WTC11 (cell line): ENCODE measurements at regions of chr4 and their contacts with region 1.

Region 1: DNA sequence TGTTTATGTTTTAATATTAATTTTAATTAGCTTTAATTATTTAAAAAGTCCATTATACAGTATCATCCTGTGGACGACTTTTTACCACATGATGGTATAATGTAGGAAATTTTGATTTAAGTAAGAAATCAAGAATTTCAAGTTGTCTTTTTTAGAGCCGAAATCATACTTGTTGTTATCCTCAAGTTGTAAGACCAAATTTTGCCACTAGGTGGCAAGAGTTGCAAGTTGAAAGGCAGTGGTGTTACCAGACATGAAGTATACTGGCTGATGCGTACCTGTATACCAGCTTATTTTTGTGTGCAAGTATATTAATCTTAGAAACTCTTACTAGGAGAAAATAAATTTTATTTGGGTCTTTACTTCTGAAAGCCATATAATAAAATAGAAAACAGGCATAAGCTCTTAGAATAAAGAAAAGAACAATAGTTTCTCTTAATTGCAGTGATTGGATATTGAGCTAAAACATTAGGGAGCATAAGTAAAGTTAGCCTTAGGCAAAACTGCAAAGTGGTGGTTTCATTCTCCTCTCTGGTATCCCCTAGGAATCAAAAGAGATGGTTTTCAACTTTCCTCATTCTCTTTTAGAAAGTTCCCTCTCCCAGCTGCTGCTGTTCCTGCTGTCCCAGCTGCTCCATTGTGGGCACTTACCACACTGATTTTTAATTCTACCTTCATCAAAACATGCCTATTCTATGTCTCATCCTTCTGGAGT is 118.0 kb upstream of the WDFY3 start:
- DNase-seq: no peak
- ATAC-seq: peak; percentile 70
- H3K4me3 Mint-ChIP-seq: no peak overlapping the region
- H3K27ac Mint-ChIP-seq: no peak overlapping the region
- H3K4me1 Mint-ChIP-seq: peaks cover 5% of the 10 kb centered on the region; the same call in 1 of the 2 replicates
- H3K27me3 Mint-ChIP-seq: no peaks in the 10 kb centered on the region
- CTCF ChIP-seq: peak; percentile 47

Region 2: DNA sequence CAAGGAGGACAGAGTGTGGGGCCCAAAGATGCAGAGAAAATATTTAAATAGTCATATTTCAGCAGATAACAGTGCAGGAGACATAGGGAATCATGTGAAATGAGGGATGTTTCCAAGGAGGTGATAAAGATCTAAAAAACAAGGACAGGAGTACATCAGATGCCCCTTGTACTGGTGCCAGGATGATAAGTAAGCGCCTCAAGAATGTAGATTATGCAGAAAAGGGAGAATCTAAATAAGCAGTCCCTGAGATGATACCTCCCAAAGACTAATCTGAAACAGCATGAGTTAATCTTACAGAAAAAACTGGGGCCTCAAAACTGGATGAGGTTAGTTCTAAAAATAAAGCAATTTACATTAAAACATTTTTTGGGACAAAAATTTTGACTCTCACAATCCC is 18.1 kb after region 1 on chr4:
- CTCF ChIA-PET with region 1: interaction called, 12 read pairs
- POLR2A ChIA-PET with region 1: no interaction called
- DNase-seq: no peak
- ATAC-seq: no peak
- H3K4me3 Mint-ChIP-seq: no peak overlapping the region
- H3K27ac Mint-ChIP-seq: no peak overlapping the region
- H3K4me1 Mint-ChIP-seq: no peaks in the 10 kb centered on the region
- H3K27me3 Mint-ChIP-seq: no peaks in the 10 kb centered on the region; the same call in 1 of the 2 replicates
- CTCF ChIP-seq: no peak

Region 3: DNA sequence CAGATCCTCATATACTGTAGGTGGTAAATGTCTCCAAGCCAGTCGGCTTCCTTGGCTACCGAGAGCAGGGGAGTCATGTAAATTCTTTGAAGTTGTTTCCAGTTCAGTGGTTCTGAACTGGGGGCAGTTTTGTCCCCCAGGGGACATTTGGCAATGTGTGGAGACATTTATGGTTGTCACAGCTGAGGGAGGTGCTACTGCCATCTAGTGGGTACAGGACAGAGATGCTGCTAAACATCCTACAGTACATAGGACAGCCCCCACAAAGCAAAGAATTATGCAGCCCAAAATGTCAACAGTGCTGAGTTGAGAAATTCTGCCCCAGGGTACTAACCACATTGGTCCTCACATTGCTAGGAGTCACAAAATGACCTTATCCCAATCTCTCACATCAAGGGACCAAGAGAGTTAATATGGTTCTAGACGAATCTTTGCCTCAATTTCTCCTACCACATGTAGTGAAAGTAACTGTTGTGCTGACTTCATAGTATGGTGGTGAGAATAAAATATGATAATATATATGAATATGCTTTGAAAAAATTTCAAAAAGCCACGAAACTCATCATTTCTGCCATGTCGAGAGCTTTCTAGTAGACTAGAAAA is 286.0 kb after region 1 on chr4:
- CTCF ChIA-PET with region 1: interaction called, 12 read pairs
- POLR2A ChIA-PET with region 1: no interaction called
- DNase-seq: peak; percentile 52
- ATAC-seq: peak; percentile 88
- H3K4me3 Mint-ChIP-seq: no peak overlapping the region
- H3K27ac Mint-ChIP-seq: no peak overlapping the region
- H3K4me1 Mint-ChIP-seq: peaks cover 31% of the 10 kb centered on the region
- H3K27me3 Mint-ChIP-seq: no peaks in the 10 kb centered on the region; the same call in 1 of the 2 replicates
- CTCF ChIP-seq: peak; percentile 73

Region 4: DNA sequence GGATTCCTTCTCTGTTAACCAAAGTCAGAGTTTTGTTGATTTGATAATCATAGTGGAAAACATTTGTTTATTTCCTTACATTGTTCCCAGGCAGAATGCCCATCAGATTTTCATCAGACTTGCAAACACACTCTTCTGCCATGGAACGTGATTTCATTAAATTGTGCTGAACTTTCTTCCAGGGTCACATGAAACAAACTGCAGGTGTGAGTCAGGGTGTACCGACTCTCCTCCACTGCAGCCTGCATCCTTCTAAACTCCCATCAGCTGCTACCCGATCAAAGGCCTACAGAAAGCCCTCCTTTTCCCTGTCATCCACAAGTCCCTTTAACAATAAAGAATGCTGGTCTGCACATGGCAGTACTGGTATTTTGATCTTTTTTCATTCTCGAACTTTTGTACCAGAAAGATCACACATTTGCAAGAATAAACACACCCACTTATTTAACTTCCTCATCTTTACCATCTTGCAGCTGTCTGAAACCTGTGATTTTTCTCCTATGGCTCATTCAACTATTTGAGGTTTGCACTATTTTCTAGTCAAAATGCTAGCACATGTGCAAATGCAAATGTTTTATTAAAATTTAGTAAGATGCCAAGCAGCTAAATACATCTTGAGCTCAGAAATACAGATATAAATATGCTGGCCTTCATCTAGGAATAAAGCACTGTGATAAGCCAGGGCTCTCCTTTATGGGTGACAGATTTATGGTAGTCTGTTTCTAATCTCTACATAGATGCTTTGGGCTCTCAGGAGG is 364.5 kb after region 1 on chr4:
- CTCF ChIA-PET with region 1: no interaction called
- POLR2A ChIA-PET with region 1: no interaction called
- DNase-seq: no peak
- ATAC-seq: no peak
- H3K4me3 Mint-ChIP-seq: no peak overlapping the region
- H3K27ac Mint-ChIP-seq: no peak overlapping the region
- H3K4me1 Mint-ChIP-seq: no peaks in the 10 kb centered on the region
- H3K27me3 Mint-ChIP-seq: no peaks in the 10 kb centered on the region
- CTCF ChIP-seq: no peak